A673 (cell line): ENCODE measurements at regions of chr1 and their contacts with region 1.

Region 1: GRCh38 chr1:179251675-179252074 is 22.2 kb upstream of the ABL2 start:
- DNase-seq: peak; percentile 48
- H3K4me3 ChIP-seq: no peak overlapping the region
- H3K27ac ChIP-seq: no peak overlapping the region
- H3K4me1 ChIP-seq: no peaks in the 10 kb centered on the region
- H3K27me3 ChIP-seq: no peaks in the 10 kb centered on the region
- CTCF ChIP-seq: peak; percentile 59

Region 2: GRCh38 chr1:179217943-179218507 is 33.6 kb before region 1 on chr1:
- CTCF ChIA-PET with region 1: no interaction called
- POLR2A ChIA-PET with region 1: no interaction called
- intact Hi-C with region 1: no loop called
- DNase-seq: peak; percentile 47
- H3K4me3 ChIP-seq: no peak overlapping the region
- H3K27ac ChIP-seq: peak overlapping the region; percentile 48
- H3K4me1 ChIP-seq: peaks cover 12% of the 10 kb centered on the region
- H3K27me3 ChIP-seq: no peaks in the 10 kb centered on the region
- CTCF ChIP-seq: no peak

Region 3: DNA sequence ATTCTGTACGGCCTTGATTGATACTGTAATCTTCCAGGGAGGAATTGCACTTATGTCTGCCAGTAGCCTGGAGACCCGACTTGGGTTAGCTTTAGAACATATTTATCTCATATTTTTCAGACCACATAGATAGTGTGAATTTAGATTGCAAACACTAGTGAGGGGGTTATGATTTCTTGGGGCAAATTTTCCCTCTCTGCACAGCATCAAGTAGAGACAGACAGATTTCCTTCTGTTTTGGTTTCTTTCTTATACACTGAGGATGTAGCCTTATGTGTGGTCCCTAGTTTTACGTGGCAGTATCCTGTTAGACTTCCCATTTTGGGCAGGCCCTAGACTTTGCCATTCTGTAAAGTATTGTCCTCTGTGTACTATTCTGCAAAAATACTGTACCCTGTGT is 70.9 kb after region 1 on chr1:
- CTCF ChIA-PET with region 1: no interaction called
- POLR2A ChIA-PET with region 1: no interaction called
- intact Hi-C with region 1: no loop called
- DNase-seq: no peak
- H3K4me3 ChIP-seq: no peak overlapping the region
- H3K27ac ChIP-seq: no peak overlapping the region
- H3K4me1 ChIP-seq: peaks cover 9% of the 10 kb centered on the region
- H3K27me3 ChIP-seq: no peaks in the 10 kb centered on the region
- CTCF ChIP-seq: no peak

Region 4: DNA sequence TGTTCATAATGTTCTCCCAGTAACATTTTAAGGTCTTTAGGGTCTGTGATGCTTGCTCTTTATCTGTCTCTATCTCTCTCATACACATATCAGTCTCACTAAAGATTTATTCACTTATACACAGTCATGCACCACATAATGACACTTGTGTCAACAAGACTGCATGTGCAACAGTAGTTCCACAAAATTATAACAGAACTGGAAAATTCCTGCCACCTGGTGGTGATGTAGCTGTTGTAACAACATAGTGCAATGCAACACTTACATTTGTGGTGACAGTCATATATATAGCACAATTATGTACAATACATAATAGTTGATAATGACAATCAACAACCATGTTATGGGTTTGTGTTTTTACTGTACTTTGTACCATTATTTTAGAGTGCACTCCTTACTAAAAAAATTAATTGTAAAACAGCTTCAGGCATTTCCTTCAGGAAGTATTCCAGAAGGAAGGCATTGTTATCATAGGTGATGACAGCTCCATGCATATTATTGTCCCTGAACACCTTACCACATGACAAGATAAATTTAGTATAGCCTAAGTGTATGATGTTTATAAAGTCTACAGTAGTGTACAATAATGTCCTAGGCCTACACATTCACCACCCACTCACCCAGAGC is 348.1 kb after region 1 on chr1:
- CTCF ChIA-PET with region 1: no interaction called
- POLR2A ChIA-PET with region 1: no interaction called
- intact Hi-C with region 1: loop called (anchors 5 kb)
- DNase-seq: peak; percentile 51
- H3K4me3 ChIP-seq: no peak overlapping the region
- H3K27ac ChIP-seq: no peak overlapping the region
- H3K4me1 ChIP-seq: no peaks in the 10 kb centered on the region
- H3K27me3 ChIP-seq: peaks cover 23% of the 10 kb centered on the region
- CTCF ChIP-seq: peak; percentile 71

Region 5: GRCh38 chr1:180976191-180976590 is 1724.5 kb after region 1 on chr1:
- CTCF ChIA-PET with region 1: interaction called, 10 read pairs
- POLR2A ChIA-PET with region 1: no interaction called
- intact Hi-C with region 1: no loop called
- DNase-seq: no peak
- H3K4me3 ChIP-seq: no peak overlapping the region
- H3K27ac ChIP-seq: no peak overlapping the region
- H3K4me1 ChIP-seq: peaks cover 3% of the 10 kb centered on the region
- H3K27me3 ChIP-seq: no peaks in the 10 kb centered on the region
- CTCF ChIP-seq: no peak